B cell (primary cell): ENCODE measurements at regions of chr11 and their contacts with region 1.

Region 1: DNA sequence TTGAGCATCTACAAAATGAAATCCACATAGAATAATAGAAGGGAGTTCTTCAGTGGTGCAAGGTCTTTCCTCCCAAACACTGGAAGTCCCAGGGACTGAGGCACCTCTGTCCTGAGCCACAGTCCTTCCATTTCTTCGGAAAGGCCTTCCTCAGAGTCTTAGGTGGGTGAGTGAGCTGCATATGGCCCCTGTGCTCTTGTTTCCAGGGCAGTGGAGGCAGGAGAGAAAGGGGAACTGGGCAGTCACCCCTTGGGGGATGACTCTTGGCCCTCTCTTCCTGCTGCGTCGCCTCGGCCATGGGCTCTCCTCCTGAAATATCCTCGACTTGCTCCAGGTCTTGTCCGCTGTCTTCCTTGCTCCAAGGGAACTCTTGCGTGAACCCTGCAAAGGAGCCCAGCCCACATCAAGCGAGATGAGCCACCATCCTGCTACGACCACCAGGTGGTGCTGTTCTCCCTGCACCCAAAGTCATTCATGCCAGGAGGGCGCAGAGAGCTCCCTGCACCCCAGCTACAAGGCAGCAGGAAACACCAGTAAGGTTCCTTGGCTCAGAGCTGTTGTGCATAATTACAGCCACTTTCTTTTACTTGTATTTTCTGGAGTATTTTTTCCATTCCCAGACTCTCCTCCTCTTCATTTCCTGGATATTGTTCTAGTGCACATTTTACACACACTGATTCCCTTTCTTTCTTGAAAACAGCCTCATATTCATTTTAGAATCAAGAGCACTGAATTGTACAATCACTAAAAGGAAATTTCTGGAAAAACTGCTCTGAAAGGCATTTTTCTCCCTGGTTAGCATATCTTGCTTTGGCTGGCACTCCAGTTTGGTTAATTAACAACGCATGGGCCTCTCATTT is 397.8 kb downstream of the OPCML start:
- DNase-seq: peak; percentile 20
- ATAC-seq: no peak
- H3K4me3 ChIP-seq: no peak overlapping the region
- H3K4me3 Mint-ChIP-seq: no peak overlapping the region
- H3K27ac ChIP-seq: no peak overlapping the region
- H3K27ac Mint-ChIP-seq: no peak overlapping the region
- H3K4me1 ChIP-seq: no peaks in the 10 kb centered on the region
- H3K4me1 Mint-ChIP-seq: no peaks in the 10 kb centered on the region
- H3K27me3 ChIP-seq: no peaks in the 10 kb centered on the region
- H3K27me3 Mint-ChIP-seq: peaks cover 3% of the 10 kb centered on the region
- CTCF ChIP-seq: peak; percentile 62

Region 2: DNA sequence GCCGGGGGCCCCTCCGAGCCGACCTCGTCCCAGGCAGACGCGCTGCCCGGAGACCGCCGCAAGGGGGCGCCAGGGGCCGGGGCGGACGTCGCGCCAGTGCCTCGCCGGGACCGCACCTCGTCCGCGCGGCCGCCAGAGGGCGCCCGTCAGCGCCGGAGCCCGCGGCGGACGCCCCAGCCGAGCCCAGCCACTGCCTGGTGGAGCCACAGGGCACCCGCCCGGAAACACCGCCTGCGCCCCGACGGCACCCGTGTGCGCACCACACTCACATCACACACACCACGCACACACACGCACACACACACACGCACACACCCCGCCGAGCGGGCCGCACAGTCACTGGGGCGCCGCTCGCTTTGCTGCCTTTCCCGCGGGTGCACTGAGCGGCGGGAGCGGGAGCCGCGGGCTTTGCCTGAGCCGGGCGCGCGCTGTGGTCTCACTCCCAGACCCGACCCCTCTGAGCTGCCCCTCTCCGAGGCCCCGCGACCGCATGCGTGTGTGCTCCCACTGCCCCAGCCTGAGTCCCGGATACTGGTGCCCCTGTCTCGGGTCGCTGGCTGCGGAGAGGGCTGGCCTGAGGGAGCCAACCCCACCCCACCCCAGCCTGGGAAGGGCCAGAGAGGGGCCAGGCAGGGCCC is 51.6 kb before region 1 on chr11:
- CTCF ChIA-PET with region 1: no interaction called
- POLR2A ChIA-PET with region 1: no interaction called
- intact Hi-C with region 1: loop called (anchors 10 kb)
- DNase-seq: peak; percentile 21
- ATAC-seq: peak; percentile 39
- H3K4me3 ChIP-seq: no peak overlapping the region
- H3K4me3 Mint-ChIP-seq: no peak overlapping the region
- H3K27ac ChIP-seq: no peak overlapping the region
- H3K27ac Mint-ChIP-seq: no peak overlapping the region
- H3K4me1 ChIP-seq: peaks cover 0 to 5% of the 10 kb centered on the region in 2 donors
- H3K4me1 Mint-ChIP-seq: no peaks in the 10 kb centered on the region
- H3K27me3 ChIP-seq: peaks cover 0 to 16% (median 9%) of the 10 kb centered on the region in 4 experiments
- H3K27me3 Mint-ChIP-seq: peaks cover 37% of the 10 kb centered on the region
- CTCF ChIP-seq: peak; percentile 22

Region 3: DNA sequence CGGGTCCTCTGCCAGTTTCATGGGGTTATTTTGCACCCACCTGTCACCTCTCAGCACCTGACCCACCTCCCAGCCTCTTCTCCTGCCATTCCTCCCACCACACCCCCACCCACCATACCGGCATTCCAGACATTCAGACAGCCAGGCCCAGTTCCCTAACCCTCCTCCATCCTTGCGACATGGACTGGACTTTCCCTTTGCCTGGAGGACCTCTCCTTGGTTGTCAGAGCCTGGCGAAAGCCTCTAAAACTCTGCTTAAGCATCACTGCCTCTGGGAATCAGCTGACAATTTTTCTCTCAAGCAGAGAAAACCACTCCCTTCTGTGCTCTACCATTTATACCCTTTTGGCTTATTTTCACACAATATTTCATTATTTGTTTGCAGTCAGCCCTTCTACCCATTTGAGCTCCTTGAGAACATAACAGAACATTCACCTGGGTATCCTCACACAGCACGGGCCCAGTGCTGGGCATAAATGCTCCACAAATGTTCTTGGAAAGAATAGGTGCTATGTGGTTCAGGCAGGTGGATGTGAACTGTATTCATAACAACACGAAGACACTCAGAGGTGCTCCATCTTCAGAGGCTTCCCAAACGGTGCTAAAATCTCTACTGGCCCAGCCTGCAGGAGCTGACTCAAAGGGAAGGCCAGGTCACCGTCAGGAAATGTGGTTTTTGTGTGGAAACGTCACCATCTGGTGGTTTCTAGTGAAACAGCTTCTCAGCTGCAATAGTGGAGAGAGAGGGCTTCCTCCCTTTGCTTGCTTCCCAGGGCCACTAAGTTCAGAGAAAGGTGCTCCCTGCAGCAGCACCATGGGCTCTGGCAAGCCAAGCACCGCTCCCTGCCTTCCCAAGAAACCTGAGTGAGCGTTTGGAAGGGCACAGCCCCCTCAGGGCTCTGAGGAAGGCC is 700.4 kb after region 1 on chr11:
- CTCF ChIA-PET with region 1: interaction called, 5 read pairs
- POLR2A ChIA-PET with region 1: no interaction called
- intact Hi-C with region 1: loop called (anchors 10 kb)
- DNase-seq: no peak
- ATAC-seq: no peak
- H3K4me3 ChIP-seq: no peak overlapping the region
- H3K4me3 Mint-ChIP-seq: no peak overlapping the region
- H3K27ac ChIP-seq: no peak overlapping the region
- H3K27ac Mint-ChIP-seq: no peak overlapping the region
- H3K4me1 ChIP-seq: no peaks in the 10 kb centered on the region
- H3K4me1 Mint-ChIP-seq: no peaks in the 10 kb centered on the region
- H3K27me3 ChIP-seq: peaks cover 0 to 2% (median 0%) of the 10 kb centered on the region in 4 experiments
- H3K27me3 Mint-ChIP-seq: no peaks in the 10 kb centered on the region
- CTCF ChIP-seq: peak; percentile 44